ENCODE measurements at regions of chr20 and their contacts with region 1.

Region 1: GRCh38 chr20:56995576-56996075 is 270.8 kb downstream of the BMP7 start:
- DNase-seq: no peak
- H3K4me3 ChIP-seq: no peak overlapping the region
- CTCF ChIP-seq: peak; percentile 73

Region 2: DNA sequence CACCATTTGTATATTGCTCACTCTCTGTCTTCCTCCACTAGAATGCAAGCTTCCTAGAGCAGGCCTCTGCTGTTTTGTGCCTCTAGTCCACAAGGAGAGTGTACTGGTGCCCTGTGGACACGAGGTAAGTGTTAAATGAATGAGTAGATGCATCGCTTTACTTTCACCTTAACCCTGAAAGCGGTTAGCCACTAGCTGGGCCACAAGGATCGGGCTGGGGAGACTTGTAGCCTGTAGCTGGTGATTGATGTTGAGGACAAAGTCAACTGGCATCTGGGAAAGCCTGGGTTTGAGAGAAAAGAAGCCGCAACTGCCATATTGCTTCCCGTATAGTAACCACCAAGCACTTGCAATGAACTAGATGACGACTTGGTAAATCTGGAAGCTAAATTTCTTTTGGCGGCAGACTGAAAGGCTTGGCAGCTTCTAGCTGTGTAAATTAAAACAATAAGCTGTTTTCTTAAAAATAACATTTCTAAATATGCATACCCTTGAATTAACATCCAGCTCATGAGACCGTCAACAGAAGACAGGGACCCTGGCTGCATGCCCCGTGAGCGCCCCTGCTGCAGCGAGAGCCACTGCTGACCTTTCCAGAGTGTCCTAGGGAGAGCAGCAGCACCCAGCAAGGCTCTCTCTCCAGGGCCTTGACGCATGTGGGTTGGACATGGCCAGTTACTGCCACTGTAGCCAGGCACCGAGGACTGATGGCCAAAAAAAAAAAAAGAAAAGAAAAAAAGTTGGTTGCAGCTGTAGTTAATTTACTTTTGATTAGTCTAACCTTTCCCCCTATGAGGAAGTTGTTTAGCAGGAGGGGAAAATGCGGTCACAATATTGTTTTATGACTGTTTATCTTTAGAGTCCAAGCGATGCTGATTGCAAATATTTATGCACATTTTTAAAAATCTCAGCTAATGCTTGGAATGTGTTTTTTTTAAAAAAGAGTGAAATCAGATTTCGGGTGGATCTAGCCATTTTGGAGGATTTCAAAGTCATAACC is 51.4 kb before region 1 on chr20:
- in situ Hi-C with region 1: loop called (anchors 5 kb)
- DNase-seq: no peak
- H3K4me3 ChIP-seq: no peak overlapping the region
- CTCF ChIP-seq: no peak